Motor neuron (in vitro differentiated cells): ENCODE measurements at regions of chr11 and their contacts with region 1.

Region 1: DNA sequence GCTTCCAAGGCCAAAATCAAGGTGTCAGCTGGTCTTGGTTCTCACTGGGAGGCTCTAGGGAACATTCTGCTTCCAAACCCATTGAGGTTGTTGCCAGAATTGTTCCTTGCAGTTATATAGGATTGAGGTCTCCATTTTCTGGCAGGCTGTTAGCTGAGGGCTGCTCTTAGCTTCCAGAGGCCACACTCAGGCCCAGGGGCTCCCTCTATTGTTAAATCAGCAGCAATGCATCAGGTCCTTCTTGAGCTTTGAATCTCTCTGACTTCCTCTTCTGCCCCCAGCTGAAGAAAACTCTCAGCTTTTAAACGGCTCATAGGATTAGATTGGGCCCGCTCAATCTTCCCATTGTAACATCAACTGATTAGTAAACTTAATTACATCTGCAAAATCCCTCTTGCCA is 39.3 kb upstream of the BSX start:
- ATAC-seq: peak in 3 of 8 experiments; percentile 83 to 88 (median 84)
- H3K4me3 ChIP-seq: no peak overlapping the region
- H3K27ac ChIP-seq: no peak overlapping the region
- H3K4me1 ChIP-seq: no peaks in the 10 kb centered on the region

Region 2: GRCh38 chr11:122843281-122844141 is 177.5 kb before region 1 on chr11:
- in situ Hi-C with region 1: no loop called
- ATAC-seq: peak in 5 of 8 experiments; percentile 27 to 56 (median 47)
- H3K4me3 ChIP-seq: no peak overlapping the region
- H3K27ac ChIP-seq: no peak overlapping the region
- H3K4me1 ChIP-seq: no peaks in the 10 kb centered on the region

Region 3: DNA sequence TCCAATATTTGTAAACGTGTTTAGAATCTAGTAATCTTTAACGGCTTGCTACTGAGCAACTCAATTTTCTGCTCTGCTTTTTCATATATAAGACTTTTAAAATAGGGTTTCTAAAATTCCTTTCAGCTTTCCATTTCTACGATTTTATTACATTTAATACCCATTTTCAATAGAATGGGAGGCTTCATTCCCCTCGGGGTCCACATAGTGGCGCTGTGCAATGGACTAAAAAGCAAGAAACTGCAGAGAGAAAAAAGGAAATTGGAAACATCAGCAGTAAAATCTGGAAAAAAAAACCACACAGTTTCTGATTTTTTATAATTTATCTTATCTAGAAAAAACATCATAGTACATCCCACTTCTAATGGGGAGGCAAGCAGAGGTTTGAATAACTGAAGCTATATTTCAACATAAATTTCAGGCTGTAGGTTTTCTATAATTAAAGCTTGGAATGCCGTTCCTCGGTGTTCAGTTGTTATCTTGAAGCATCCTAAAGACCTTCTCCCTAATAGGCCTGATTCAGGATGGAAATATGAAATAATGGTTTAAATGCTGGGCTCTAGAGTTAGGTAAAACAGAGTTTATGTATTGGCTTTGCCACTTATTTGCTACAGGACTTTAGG is 157.2 kb before region 1 on chr11:
- in situ Hi-C with region 1: loop called in 4 of 9 experiments (anchors 10 to 25 kb)
- ATAC-seq: no peak
- H3K4me3 ChIP-seq: no peak overlapping the region
- H3K27ac ChIP-seq: no peak overlapping the region
- H3K4me1 ChIP-seq: no peaks in the 10 kb centered on the region

Region 4: DNA sequence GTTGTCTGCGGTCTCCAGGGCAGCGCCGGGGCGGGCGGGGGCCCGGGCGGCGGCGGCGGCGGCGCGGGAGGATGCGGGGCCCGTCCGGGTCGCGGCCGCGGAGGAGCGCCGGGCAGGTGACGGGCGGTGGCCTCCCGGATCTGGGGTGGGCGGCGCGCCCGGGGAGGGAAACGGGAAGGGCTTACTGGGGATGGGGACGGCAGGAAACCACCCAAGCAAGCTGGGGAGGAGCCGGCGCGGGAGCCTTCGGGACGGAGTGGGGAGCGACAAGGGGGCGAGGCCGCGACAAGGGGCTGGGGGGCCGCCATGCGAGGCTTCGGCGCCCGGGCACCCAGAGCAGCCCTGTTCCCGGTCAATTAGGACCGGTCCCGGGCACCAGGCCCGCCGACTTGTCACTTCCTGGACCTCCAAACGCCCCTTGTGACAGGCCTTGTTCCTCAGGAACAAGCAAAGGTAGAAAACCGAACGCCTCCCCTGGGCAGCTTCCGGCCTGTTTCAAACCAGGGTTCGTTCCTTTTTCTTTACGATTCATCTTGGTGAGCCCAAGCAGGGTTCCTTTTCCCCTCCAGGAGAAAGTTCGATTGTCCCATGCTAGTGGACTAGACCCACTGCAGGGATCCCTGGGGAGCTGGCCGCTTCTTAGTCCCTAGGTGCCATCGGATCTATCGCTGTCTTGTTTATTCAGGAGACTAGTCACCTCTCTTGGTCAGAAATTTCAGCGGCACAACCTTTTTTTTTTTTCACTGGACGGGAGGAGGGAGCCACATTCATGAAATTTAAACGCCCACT is 137.9 kb before region 1 on chr11:
- in situ Hi-C with region 1: loop called in 1 of 9 experiments (anchors 25 kb)
- ATAC-seq: peak; percentile 64 to 91 (median 86)
- H3K4me3 ChIP-seq: peak overlapping the region; percentile 41 to 53 (median 46)
- H3K27ac ChIP-seq: no peak overlapping the region
- H3K4me1 ChIP-seq: peaks cover 8 to 14% of the 10 kb centered on the region in 2 donors

Region 5: GRCh38 chr11:122910775-122911174 is 110.2 kb before region 1 on chr11:
- in situ Hi-C with region 1: loop called in 1 of 9 experiments (anchors 10 kb)
- ATAC-seq: peak in 2 of 8 experiments; percentile 19 to 26
- H3K4me3 ChIP-seq: no peak overlapping the region
- H3K27ac ChIP-seq: no peak overlapping the region
- H3K4me1 ChIP-seq: no peaks in the 10 kb centered on the region

Region 6: DNA sequence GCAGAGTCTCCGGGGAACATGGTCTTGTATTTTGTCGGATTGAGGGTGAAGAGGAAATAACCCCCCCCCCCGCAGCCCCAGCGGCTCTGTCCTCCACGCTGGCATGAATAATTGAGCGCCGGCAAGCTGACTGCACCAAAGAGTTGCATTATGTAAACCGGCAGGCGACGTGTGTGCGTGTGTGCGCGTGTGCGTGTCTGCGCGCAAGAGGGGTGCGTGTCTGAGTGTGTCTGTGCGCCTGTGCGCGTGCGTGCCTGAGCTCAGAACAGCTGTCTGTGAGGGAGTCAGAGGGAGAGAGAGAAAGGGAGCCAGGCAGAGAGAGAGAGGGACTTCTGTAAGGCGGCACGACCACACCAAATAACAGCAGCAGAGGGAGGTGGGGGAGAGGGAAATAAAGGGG is 539.0 kb after region 1 on chr11:
- in situ Hi-C with region 1: no loop called
- ATAC-seq: peak; percentile 85 to 93 (median 90)
- H3K4me3 ChIP-seq: peak overlapping the region; percentile 15 to 46 (median 33)
- H3K27ac ChIP-seq: peak overlapping the region; percentile 89 to 96
- H3K4me1 ChIP-seq: peaks cover 38 to 48% of the 10 kb centered on the region in 2 donors